AG04449 (cell line): ENCODE measurements at regions of chr3 and their contacts with region 1.

Region 1: GRCh38 chr3:53709860-53710674 is 136.2 kb downstream of the CHDH start:
- DNase-seq: no peak
- H3K4me3 ChIP-seq: no peak overlapping the region
- CTCF ChIP-seq: peak; percentile 85

Region 2: DNA sequence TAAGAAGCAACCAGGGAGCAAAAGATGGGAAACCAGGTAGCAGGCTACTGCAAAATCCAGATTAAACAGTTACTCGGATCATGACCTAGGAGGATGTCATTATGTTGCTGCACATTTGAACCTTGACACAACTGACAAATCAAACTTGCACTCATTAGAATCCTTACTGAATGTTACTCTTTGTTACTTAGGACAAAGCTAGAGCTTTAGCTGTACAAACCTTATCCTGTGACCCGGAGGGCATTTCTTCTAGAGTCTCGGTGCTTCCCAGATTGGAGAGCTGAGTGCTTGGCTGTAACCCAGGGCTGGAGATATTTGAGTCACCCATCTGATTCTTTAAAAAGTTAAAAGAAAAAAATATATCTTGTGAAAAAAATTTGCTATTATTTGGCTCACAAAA is 406.1 kb before region 1 on chr3:
- CTCF ChIA-PET with region 1: interaction called, 46 read pairs
- POLR2A ChIA-PET with region 1: no interaction called
- DNase-seq: no peak
- H3K4me3 ChIP-seq: no peak overlapping the region
- CTCF ChIP-seq: no peak

Region 3: DNA sequence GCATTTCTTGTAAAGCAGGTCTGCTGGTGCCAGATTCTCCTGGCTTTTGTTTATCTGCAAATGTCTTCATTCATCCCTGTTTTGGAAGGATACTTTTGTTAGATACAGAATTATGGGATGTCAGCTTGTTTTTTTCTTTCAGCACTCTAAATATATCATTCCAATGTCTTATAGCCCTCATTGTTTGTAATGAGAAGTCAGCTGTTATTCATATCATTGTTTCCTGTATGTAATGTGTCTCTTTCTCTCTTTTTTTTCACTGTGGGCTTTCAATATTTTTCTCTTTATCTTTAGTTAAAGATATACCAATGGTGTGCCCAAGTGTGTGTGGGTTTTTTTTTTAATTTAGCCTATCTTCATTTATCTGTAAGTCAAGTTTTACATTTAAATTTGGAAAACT is 297.1 kb before region 1 on chr3:
- CTCF ChIA-PET with region 1: no interaction called
- POLR2A ChIA-PET with region 1: no interaction called
- DNase-seq: no peak
- H3K4me3 ChIP-seq: no peak overlapping the region
- CTCF ChIP-seq: no peak

Region 4: DNA sequence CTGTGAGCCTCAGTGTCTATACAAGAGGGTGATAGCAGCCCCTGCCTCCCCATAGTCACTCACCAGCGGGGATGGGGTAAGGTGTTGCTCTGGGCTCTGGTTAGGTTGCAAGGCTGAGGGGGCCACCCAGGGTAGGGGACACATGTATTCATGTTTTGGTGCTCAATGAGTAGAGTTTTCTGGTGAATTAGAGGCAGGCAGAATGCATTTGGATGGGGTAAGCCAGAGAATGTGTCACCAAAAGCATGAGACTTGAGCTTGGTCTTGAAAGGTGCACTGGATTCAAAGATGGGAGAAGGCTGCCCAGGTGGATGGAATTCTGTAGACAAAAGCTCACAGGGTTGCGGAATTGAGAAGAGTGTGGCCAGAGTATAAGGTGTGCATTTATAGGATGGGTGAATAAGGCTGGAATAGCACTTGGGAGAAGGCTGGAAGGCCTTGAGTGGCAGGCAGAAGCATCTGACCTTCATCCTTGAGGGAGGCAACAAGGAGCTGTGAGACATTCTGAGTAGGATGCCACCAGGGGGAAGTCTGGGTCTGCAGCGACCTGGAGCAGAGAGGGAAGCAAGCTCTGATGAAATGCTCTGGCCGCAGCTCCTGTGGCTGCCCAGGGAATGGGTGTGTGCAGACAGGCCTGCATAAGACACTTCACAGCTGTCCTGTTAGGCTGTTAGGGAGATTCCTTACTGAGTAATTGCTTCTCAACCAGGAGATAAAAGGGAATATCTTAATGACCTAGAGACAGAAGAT is 13.5 kb before region 1 on chr3:
- CTCF ChIA-PET with region 1: interaction called, 12 read pairs
- POLR2A ChIA-PET with region 1: no interaction called
- DNase-seq: no peak
- H3K4me3 ChIP-seq: no peak overlapping the region
- CTCF ChIP-seq: peak; percentile 6

Region 5: DNA sequence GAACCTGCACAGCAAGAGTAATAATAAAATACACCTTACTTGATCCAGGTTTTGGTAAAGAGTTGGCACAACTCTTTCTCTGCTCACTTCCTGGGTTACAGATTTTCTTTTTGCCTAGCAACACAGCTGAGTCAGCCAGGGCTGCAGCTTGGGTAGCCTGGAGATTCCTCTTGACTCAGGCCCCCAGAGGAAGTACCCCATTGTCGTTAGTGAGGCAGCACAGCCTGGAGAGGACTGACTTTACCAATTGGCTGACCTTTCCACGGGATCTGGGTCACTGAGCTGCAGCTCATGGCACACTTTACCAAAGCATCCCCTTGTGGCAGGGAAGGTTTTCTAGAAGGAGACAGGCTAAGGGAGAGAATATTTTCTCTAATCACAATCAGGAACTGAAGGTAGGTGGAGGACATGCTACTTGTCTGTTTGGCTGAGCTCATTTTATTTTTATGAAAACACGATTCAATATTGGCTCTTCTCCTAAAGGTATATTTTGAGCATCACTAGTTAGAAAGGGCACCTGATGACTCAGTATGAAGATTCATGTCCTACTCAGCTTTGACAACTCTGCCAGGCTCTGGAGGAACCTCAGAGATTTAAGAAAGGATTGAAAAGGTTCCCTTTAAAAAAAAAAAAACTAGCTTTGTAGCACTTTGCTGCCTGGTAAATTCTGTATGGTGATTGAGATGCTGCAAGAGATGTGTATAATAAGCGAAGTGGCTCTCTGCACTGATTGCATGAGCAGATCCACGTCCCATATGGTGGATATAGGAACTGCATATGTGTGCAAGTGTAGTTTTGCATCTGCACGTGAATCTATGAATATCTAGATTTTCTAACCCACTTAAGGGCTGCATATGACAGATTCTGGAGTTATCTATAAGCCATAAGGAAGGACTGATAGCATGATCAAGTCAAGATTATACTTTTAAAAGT is 11.4 kb after region 1 on chr3:
- CTCF ChIA-PET with region 1: interaction called, 15 read pairs
- POLR2A ChIA-PET with region 1: no interaction called
- DNase-seq: no peak
- H3K4me3 ChIP-seq: no peak overlapping the region
- CTCF ChIP-seq: no peak

Region 6: DNA sequence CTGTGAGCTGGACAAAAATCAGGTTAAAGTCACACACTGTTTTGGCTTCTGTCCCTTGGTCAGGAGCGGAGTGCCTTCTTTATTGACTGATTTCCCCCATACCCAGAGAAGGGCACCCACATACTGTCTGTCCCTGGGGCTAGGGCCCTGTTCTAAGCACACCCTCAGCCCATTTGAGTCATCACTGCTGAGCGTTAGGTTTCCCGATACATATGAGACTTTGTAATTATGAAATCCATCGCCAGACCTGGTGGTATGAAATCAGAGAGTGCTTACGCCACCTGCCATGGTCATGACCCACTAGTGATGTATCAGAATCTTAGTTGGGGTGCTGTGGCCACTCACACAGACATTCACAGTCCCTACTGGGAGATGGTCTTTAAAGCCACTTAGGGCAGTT is 39.4 kb after region 1 on chr3:
- CTCF ChIA-PET with region 1: no interaction called
- POLR2A ChIA-PET with region 1: no interaction called
- DNase-seq: no peak
- H3K4me3 ChIP-seq: no peak overlapping the region
- CTCF ChIP-seq: no peak

Region 7: GRCh38 chr3:54046641-54047214 is 336.7 kb after region 1 on chr3:
- CTCF ChIA-PET with region 1: no interaction called
- POLR2A ChIA-PET with region 1: no interaction called
- DNase-seq: no peak
- H3K4me3 ChIP-seq: no peak overlapping the region
- CTCF ChIP-seq: no peak